ENCODE measurements at regions of chr12 and their contacts with region 1.

Region 1: DNA sequence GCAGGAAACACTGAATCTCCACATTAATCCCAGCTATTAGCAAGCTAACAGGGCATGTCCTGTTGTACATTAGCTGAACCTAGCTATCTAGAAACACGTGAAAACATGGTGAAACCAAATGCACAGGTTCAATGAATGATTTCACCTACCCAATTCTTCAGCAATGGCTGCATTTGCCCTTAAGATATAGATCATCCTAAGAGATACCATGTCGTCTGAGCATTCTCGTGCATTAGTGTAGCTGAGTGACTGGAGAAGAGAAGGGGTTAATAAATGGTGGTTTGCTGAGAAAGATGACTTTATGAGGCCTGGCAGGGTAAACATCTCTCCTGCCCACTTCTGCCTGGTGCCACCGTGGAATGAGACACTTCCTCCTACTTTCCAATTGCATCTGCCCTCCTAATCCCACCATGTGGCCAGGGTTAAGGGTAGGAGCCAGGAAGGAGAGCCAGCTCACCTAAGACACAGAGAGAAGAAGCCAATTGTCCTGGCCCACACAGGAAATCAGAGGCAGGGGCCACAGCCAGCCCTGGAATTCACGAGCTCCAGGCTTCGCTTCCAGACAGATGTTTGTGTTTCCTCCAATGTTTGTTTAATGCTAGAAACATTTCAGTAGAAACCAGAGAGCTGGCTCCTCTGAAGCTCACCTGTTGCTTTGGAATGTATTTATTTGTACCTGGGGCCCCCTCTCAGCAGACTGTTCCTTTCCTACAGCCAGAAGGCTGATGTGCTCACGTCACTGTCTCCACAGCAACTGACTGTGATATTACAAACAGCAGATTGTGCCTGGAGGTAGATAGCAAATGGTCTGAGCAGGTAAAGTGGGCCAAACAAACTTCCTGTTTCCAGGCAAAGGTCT is 126.0 kb upstream of the PARP11 start:
- DNase-seq: peak; percentile 94
- H3K4me3 ChIP-seq: no peak overlapping the region
- H3K4me3 Mint-ChIP-seq: peak overlapping the region; percentile 19
- H3K27ac Mint-ChIP-seq: peak overlapping the region; percentile 98
- H3K4me1 ChIP-seq: peaks cover 31% of the 10 kb centered on the region
- H3K4me1 Mint-ChIP-seq: peaks cover 51% of the 10 kb centered on the region
- H3K27me3 ChIP-seq: no peaks in the 10 kb centered on the region
- H3K27me3 Mint-ChIP-seq: no peaks in the 10 kb centered on the region
- CTCF ChIP-seq: no peak

Region 2: GRCh38 chr12:3885277-3886094 is 113.7 kb before region 1 on chr12:
- CTCF ChIA-PET with region 1: interaction called, 10 read pairs
- POLR2A ChIA-PET with region 1: no interaction called
- intact Hi-C with region 1: loop called (anchors 1 kb)
- DNase-seq: peak in 1 of 2 experiments; percentile 67
- H3K4me3 ChIP-seq: no peak overlapping the region
- H3K4me3 Mint-ChIP-seq: no peak overlapping the region
- H3K27ac Mint-ChIP-seq: no peak overlapping the region
- H3K4me1 ChIP-seq: 0 out of 2 replicates have a peak, but pooled peaks cover 3% of the 10 kb centered on the region
- H3K4me1 Mint-ChIP-seq: peaks cover 14% of the 10 kb centered on the region
- H3K27me3 ChIP-seq: no peaks in the 10 kb centered on the region
- H3K27me3 Mint-ChIP-seq: peaks cover 7% of the 10 kb centered on the region
- CTCF ChIP-seq: peak; percentile 90 to 98

Region 3: DNA sequence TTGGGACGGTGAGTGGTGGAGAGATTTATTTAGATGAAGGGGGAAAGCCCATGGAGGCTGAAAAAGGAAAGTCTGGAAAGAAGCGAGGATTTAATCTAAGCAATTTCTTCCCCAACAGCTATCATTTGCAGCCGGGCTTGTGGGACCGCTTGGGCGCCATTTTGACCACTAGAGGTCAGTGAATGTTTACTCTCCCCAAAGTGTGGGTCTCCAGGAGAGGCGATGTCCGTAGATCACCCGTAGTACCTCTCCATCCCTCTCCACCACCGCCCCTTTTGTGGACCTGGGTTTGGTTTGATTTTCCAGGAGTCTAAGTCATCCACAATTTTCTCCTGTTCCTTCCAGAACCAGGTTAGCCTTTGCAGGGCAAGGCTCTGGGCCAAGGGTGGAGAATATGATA is 34.8 kb before region 1 on chr12:
- CTCF ChIA-PET with region 1: interaction called, 4 read pairs
- POLR2A ChIA-PET with region 1: interaction called, 3 read pairs
- intact Hi-C with region 1: loop called (anchors 1 kb)
- DNase-seq: peak; percentile 58 to 61
- H3K4me3 ChIP-seq: no peak overlapping the region
- H3K4me3 Mint-ChIP-seq: no peak overlapping the region
- H3K27ac Mint-ChIP-seq: no peak overlapping the region
- H3K4me1 ChIP-seq: peaks cover 64% of the 10 kb centered on the region
- H3K4me1 Mint-ChIP-seq: peaks cover 61% of the 10 kb centered on the region
- H3K27me3 ChIP-seq: no peaks in the 10 kb centered on the region
- H3K27me3 Mint-ChIP-seq: no peaks in the 10 kb centered on the region
- CTCF ChIP-seq: peak; percentile 51 to 74

Region 4: GRCh38 chr12:4030929-4031702 is 31.9 kb after region 1 on chr12:
- CTCF ChIA-PET with region 1: interaction called, 42 read pairs
- POLR2A ChIA-PET with region 1: interaction called, 53 read pairs
- intact Hi-C with region 1: loop called (anchors 1 kb)
- DNase-seq: peak; percentile 99
- H3K4me3 ChIP-seq: peak overlapping the region; percentile 44
- H3K4me3 Mint-ChIP-seq: peak overlapping the region; percentile 67
- H3K27ac Mint-ChIP-seq: peak overlapping the region; percentile 96
- H3K4me1 ChIP-seq: peaks cover 49% of the 10 kb centered on the region
- H3K4me1 Mint-ChIP-seq: peaks cover 57% of the 10 kb centered on the region
- H3K27me3 ChIP-seq: no peaks in the 10 kb centered on the region
- H3K27me3 Mint-ChIP-seq: no peaks in the 10 kb centered on the region
- CTCF ChIP-seq: no peak

Region 5: GRCh38 chr12:4068981-4069669 is 69.9 kb after region 1 on chr12:
- CTCF ChIA-PET with region 1: no interaction called
- POLR2A ChIA-PET with region 1: no interaction called
- intact Hi-C with region 1: loop called (anchors 2 kb)
- DNase-seq: peak; percentile 66 to 67
- H3K4me3 ChIP-seq: no peak overlapping the region
- H3K4me3 Mint-ChIP-seq: no peak overlapping the region
- H3K27ac Mint-ChIP-seq: no peak overlapping the region
- H3K4me1 ChIP-seq: peaks cover 24% of the 10 kb centered on the region
- H3K4me1 Mint-ChIP-seq: no peaks in the 10 kb centered on the region
- H3K27me3 ChIP-seq: no peaks in the 10 kb centered on the region
- H3K27me3 Mint-ChIP-seq: peaks cover 6% of the 10 kb centered on the region
- CTCF ChIP-seq: no peak